ENCODE measurements at regions of chr17 and their contacts with region 1.

Region 1: DNA sequence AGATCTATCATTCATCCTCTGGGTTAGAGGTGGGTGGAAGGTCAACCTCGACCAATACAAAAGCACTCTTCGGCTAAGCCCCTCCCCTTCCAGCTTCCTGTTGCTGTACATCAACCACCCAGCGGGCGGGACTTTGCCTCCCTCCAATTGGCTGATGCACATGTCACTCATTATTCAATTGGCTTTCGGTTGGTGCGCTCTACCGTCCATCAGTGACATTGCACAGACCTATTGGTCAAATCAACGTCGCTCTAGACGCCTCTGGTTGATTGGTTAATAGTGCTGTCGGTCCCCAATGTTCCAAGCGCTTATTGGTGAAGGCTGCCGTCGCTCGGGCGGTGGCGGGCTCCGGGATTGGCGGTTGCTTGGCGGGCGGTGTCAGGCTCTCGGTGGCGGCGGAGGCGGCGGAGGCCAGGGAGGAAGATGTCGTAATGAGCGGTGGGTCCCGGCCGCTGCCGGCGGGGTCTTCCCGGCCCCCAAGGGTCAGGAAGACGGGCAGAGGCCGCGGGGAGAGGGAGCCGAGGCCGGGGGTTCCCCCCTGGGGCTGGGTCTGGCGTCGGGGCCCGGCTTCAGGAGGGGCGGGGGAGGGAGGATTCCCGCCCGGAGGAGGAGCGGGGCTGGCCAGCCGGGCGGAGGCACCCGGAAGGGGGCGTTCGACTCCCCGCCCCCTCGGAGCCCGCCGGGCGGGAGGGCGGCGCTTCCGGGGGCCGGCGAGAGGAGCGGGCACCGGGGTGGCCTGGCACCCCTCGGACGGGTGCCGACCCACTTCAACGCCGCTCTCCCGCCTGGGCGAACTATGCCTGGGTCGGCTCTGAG is at the start of gene SP2:
- DNase-seq: peak; percentile 98 to 100 (median 99)
- ATAC-seq: peak; percentile 85
- H3K4me3 ChIP-seq: peak within 1 kb of the TSS; percentile 91 to 94
- H3K4me3 Mint-ChIP-seq: peak within 1 kb of the TSS; percentile 99
- H3K27ac ChIP-seq: peak within 1 kb of the TSS; percentile 88 to 99
- H3K27ac Mint-ChIP-seq: peak within 1 kb of the TSS; percentile 100
- H3K4me1 ChIP-seq: peaks cover 32% of the 10 kb centered on the region
- H3K4me1 Mint-ChIP-seq: peaks cover 57% of the 10 kb centered on the region
- H3K27me3 ChIP-seq: no peaks in the 10 kb centered on the region
- H3K27me3 Mint-ChIP-seq: no peaks in the 10 kb centered on the region
- CTCF ChIP-seq: no peak
- total RNA-seq, gene SP2: 24.5 to 26.0 TPM

Region 2: GRCh38 chr17:47066841-47067682 is 829.0 kb before region 1 on chr17:
- CTCF ChIA-PET with region 1: no interaction called
- POLR2A ChIA-PET with region 1: no interaction called
- intact Hi-C with region 1: loop called in 1 of 2 experiments (anchors 5 kb)
- DNase-seq: peak; percentile 58 to 93 (median 78)
- ATAC-seq: peak; percentile 100
- H3K4me3 ChIP-seq: peak overlapping the region; percentile 76 to 93
- H3K4me3 Mint-ChIP-seq: peak overlapping the region; percentile 94
- H3K27ac ChIP-seq: peak overlapping the region; percentile 61 to 96
- H3K27ac Mint-ChIP-seq: peak overlapping the region; percentile 98
- H3K4me1 ChIP-seq: peaks cover 9% of the 10 kb centered on the region
- H3K4me1 Mint-ChIP-seq: peaks cover 32% of the 10 kb centered on the region
- H3K27me3 ChIP-seq: no peaks in the 10 kb centered on the region
- H3K27me3 Mint-ChIP-seq: no peaks in the 10 kb centered on the region
- CTCF ChIP-seq: no peak

Region 3: DNA sequence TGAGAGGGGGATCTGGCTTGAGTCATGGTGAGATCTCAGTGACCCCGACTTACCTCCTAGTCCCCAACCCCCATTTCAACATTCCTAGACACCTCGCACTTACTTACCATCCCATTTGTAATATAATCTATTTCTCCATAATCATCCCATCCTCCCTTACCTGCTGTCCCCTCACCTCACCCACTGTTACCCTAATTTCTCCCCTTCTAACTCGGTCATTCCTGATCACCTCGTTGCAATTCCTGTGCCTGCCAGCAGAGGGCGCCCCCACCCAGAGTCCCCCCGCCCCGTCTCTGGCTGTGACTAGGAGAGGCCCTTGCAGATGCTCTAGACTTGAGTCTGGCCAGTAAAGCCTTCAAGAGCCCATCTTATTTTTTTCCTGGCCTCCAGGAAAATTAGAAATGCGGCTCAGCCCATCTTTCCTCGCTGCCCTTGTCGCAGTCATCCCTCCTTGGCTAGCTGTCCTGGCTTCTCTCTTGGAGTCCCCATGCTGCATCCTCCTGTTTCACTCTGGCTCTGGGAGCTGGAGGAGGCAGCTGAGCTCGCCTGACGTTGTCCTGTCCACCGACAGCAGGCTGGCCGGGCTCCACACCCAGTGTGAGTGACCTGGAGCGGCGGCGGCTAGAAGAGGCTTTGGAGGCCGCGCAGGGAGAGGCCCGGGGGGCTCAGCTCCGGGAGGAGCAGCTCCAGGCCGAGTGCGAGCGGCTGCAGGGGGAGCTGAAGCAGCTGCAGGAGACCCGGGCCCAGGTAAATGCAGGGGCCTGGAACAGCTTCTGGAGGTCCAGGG is 197.1 kb before region 1 on chr17:
- CTCF ChIA-PET with region 1: no interaction called
- POLR2A ChIA-PET with region 1: no interaction called
- intact Hi-C with region 1: no loop called
- DNase-seq: peak; percentile 69 to 91 (median 81)
- ATAC-seq: peak; percentile 49
- H3K4me3 ChIP-seq: no peak overlapping the region
- H3K4me3 Mint-ChIP-seq: no peak overlapping the region
- H3K27ac ChIP-seq: peak overlapping the region in 1 of 2 experiments; percentile 4
- H3K27ac Mint-ChIP-seq: no peak overlapping the region
- H3K4me1 ChIP-seq: peaks cover 38% of the 10 kb centered on the region
- H3K4me1 Mint-ChIP-seq: peaks cover 43% of the 10 kb centered on the region
- H3K27me3 ChIP-seq: no peaks in the 10 kb centered on the region
- H3K27me3 Mint-ChIP-seq: no peaks in the 10 kb centered on the region
- CTCF ChIP-seq: peak; percentile 96

Region 4: GRCh38 chr17:47725446-47726111 is 170.5 kb before region 1 on chr17:
- CTCF ChIA-PET with region 1: no interaction called
- POLR2A ChIA-PET with region 1: no interaction called
- intact Hi-C with region 1: no loop called
- DNase-seq: no peak
- ATAC-seq: no peak
- H3K4me3 ChIP-seq: no peak overlapping the region
- H3K4me3 Mint-ChIP-seq: no peak overlapping the region
- H3K27ac ChIP-seq: peak overlapping the region in 1 of 2 experiments; percentile 37
- H3K27ac Mint-ChIP-seq: no peak overlapping the region
- H3K4me1 ChIP-seq: peaks cover 31% of the 10 kb centered on the region
- H3K4me1 Mint-ChIP-seq: peaks cover 31% of the 10 kb centered on the region
- H3K27me3 ChIP-seq: no peaks in the 10 kb centered on the region
- H3K27me3 Mint-ChIP-seq: peaks cover 8% of the 10 kb centered on the region
- CTCF ChIP-seq: no peak

Region 5: DNA sequence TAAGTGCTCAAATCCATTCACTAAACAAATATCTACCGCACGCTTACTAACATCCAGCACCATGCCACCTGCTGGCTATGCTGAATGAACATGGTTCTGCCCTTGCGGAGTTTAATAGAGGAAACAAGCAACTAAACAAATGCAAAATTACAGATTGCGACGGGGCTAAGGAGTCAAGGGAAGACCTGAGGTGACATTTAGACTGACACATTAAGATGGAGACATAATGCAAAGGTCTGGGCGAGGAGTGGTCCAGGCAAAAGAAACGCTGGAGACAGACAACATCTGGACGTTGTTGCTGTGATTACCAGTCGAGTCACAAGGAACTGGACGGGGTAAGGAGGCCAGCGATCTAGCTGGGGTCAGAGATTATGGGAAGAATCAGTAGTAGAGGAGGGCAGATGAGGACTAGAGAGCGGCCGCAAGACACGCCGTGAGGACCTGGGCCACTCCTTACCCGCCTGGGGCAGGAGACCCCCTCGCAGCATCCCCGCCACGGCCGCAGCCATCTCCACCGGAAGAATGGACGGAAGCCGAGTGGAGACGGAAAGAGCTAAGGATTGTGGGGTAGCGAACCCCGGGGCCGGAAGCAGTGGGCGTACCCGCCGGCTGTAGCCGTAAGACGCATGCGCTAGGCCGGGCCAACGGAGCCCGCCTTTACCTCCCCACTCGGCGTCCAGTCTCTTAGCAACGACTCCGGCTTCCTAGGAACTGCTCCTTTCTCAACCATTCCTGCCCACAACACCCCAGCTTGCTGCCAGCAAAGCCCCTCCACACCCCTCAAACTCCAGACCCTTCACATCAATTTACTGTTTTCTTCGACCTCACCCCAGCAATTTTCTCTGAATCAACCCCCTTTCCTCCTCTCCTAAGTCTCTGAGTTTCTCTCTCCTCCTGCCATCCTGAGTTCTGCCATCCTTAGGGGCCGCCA is 64.8 kb before region 1 on chr17 and contains the starts of genes LRRC46 and MRPL10:
- CTCF ChIA-PET with region 1: interaction called, 583 read pairs
- POLR2A ChIA-PET with region 1: interaction called, 32 read pairs
- intact Hi-C with region 1: loop called (anchors 1 kb)
- DNase-seq: peak; percentile 80 to 96 (median 91)
- ATAC-seq: peak; percentile 71
- H3K4me3 ChIP-seq: peak within 1 kb of the TSS; percentile 87 to 95
- H3K4me3 Mint-ChIP-seq: peak within 1 kb of the TSS; percentile 91
- H3K27ac ChIP-seq: peak within 1 kb of the TSS; percentile 84 to 96
- H3K27ac Mint-ChIP-seq: peak within 1 kb of the TSS; percentile 98
- H3K4me1 ChIP-seq: peaks cover 30% of the 10 kb centered on the region
- H3K4me1 Mint-ChIP-seq: peaks cover 51% of the 10 kb centered on the region
- H3K27me3 ChIP-seq: no peaks in the 10 kb centered on the region
- H3K27me3 Mint-ChIP-seq: no peaks in the 10 kb centered on the region
- CTCF ChIP-seq: peak; percentile 36
- total RNA-seq, gene LRRC46: 0.43 to 1.5 TPM
- total RNA-seq, gene MRPL10: 67.5 to 69.7 TPM

Region 6: GRCh38 chr17:47847341-47848197 is 48.5 kb before region 1 on chr17:
- CTCF ChIA-PET with region 1: interaction called, 583 read pairs
- POLR2A ChIA-PET with region 1: interaction called, 12 read pairs
- intact Hi-C with region 1: no loop called
- DNase-seq: peak in 5 of 9 experiments; percentile 17 to 63 (median 39)
- ATAC-seq: no peak
- H3K4me3 ChIP-seq: no peak overlapping the region
- H3K4me3 Mint-ChIP-seq: no peak overlapping the region
- H3K27ac ChIP-seq: no peak overlapping the region
- H3K27ac Mint-ChIP-seq: no peak overlapping the region
- H3K4me1 ChIP-seq: peaks cover 48% of the 10 kb centered on the region
- H3K4me1 Mint-ChIP-seq: peaks cover 28% of the 10 kb centered on the region
- H3K27me3 ChIP-seq: peaks cover 55 to 62% of the 10 kb centered on the region in 2 experiments
- H3K27me3 Mint-ChIP-seq: peaks cover 69% of the 10 kb centered on the region
- CTCF ChIP-seq: peak; percentile 33

Region 7: GRCh38 chr17:47949136-47949759 is 53.2 kb after region 1 on chr17:
- CTCF ChIA-PET with region 1: interaction called, 4 read pairs
- POLR2A ChIA-PET with region 1: interaction called, 17 read pairs
- intact Hi-C with region 1: loop called in 1 of 2 experiments (anchors 2 kb)
- DNase-seq: peak; percentile 47 to 88 (median 79)
- ATAC-seq: peak; percentile 53
- H3K4me3 ChIP-seq: peak overlapping the region; percentile 26 to 36
- H3K4me3 Mint-ChIP-seq: peak overlapping the region; percentile 82
- H3K27ac ChIP-seq: peak overlapping the region in 1 of 2 experiments; percentile 28
- H3K27ac Mint-ChIP-seq: peak overlapping the region; percentile 81
- H3K4me1 ChIP-seq: peaks cover 51% of the 10 kb centered on the region
- H3K4me1 Mint-ChIP-seq: peaks cover 46% of the 10 kb centered on the region
- H3K27me3 ChIP-seq: no peaks in the 10 kb centered on the region
- H3K27me3 Mint-ChIP-seq: no peaks in the 10 kb centered on the region
- CTCF ChIP-seq: peak; percentile 78

Region 8: GRCh38 chr17:48047741-48048383 is 151.8 kb after region 1 on chr17 and contains the start of gene NFE2L1:
- CTCF ChIA-PET with region 1: no interaction called
- POLR2A ChIA-PET with region 1: no interaction called
- intact Hi-C with region 1: loop called in 1 of 2 experiments (anchors 2 kb)
- DNase-seq: peak; percentile 93 to 99 (median 97)
- ATAC-seq: peak; percentile 96
- H3K4me3 ChIP-seq: peak within 1 kb of the TSS; percentile 69 to 77
- H3K4me3 Mint-ChIP-seq: peak within 1 kb of the TSS; percentile 93
- H3K27ac ChIP-seq: peak within 1 kb of the TSS; percentile 88 to 91
- H3K27ac Mint-ChIP-seq: peak within 1 kb of the TSS; percentile 99
- H3K4me1 ChIP-seq: peaks cover 41% of the 10 kb centered on the region
- H3K4me1 Mint-ChIP-seq: peaks cover 57% of the 10 kb centered on the region
- H3K27me3 ChIP-seq: no peaks in the 10 kb centered on the region
- H3K27me3 Mint-ChIP-seq: no peaks in the 10 kb centered on the region
- CTCF ChIP-seq: no peak
- total RNA-seq, gene NFE2L1: 29.5 to 32.5 TPM

Region 9: GRCh38 chr17:48908047-48908843 is 1012.2 kb after region 1 on chr17 and contains the start of gene UBE2Z:
- CTCF ChIA-PET with region 1: no interaction called
- POLR2A ChIA-PET with region 1: no interaction called
- intact Hi-C with region 1: loop called in 1 of 2 experiments (anchors 5 kb)
- DNase-seq: peak; percentile 79 to 96 (median 88)
- ATAC-seq: peak; percentile 87
- H3K4me3 ChIP-seq: peak within 1 kb of the TSS; percentile 74 to 77
- H3K4me3 Mint-ChIP-seq: peak within 1 kb of the TSS; percentile 95
- H3K27ac ChIP-seq: peak within 1 kb of the TSS; percentile 88 to 95
- H3K27ac Mint-ChIP-seq: peak within 1 kb of the TSS; percentile 99
- H3K4me1 ChIP-seq: peaks cover 39% of the 10 kb centered on the region
- H3K4me1 Mint-ChIP-seq: peaks cover 49% of the 10 kb centered on the region
- H3K27me3 ChIP-seq: no peaks in the 10 kb centered on the region
- H3K27me3 Mint-ChIP-seq: no peaks in the 10 kb centered on the region
- CTCF ChIP-seq: no peak
- total RNA-seq, gene UBE2Z: 56.4 to 56.7 TPM